PC-9 (cell line): ENCODE measurements at regions of chr2 and their contacts with region 1.

Region 1: GRCh38 chr2:127408004-127408806 is 10.0 kb upstream of the PROC start:
- DNase-seq: peak; percentile 78 to 98
- H3K4me3 ChIP-seq: peak overlapping the region; percentile 65
- H3K27ac ChIP-seq: peak overlapping the region; percentile 56
- H3K4me1 ChIP-seq: peaks cover 48% of the 10 kb centered on the region
- H3K27me3 ChIP-seq: no peaks in the 10 kb centered on the region
- CTCF ChIP-seq: no peak

Region 2: DNA sequence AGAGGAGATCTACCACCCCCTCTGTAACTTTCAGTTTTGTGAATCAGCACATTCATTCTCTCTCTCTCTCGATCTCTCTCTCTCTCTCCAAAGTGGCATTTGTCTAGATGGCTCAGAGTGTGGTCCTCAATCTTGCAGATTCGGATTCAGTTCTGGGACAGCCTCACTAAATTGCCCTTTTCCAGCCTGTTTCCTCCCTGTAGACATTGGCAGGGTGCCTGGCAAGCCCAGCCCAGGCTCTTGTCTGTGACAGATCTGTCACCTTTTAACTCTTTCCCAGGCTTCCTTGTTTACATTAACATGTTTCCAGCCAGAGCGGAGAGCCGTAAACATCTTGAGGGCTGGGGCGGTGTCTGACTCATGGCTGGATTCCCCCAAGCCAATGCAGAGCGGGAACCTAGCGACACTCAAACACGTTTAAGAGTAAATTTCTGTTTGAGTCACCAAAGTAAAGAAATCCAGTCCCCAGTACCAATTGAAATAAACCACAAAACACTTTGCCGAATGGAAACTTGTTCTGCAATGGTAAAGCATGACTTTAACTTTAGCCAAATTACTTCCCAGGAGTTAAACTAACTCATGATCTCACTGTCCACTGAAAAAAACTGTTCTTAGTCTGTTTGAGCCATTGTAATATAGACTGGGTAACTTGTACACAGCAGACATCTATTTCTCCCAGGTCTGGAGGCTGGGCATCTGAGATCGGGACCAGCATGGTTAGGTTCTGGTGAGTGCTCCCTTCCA is 181.5 kb before region 1 on chr2:
- CTCF ChIA-PET with region 1: no interaction called
- POLR2A ChIA-PET with region 1: no interaction called
- intact Hi-C with region 1: loop called (anchors 5 kb)
- DNase-seq: peak; percentile 94 to 100
- H3K4me3 ChIP-seq: no peak overlapping the region
- H3K27ac ChIP-seq: peak overlapping the region; percentile 88
- H3K4me1 ChIP-seq: peaks cover 50% of the 10 kb centered on the region
- H3K27me3 ChIP-seq: no peaks in the 10 kb centered on the region
- CTCF ChIP-seq: no peak

Region 3: DNA sequence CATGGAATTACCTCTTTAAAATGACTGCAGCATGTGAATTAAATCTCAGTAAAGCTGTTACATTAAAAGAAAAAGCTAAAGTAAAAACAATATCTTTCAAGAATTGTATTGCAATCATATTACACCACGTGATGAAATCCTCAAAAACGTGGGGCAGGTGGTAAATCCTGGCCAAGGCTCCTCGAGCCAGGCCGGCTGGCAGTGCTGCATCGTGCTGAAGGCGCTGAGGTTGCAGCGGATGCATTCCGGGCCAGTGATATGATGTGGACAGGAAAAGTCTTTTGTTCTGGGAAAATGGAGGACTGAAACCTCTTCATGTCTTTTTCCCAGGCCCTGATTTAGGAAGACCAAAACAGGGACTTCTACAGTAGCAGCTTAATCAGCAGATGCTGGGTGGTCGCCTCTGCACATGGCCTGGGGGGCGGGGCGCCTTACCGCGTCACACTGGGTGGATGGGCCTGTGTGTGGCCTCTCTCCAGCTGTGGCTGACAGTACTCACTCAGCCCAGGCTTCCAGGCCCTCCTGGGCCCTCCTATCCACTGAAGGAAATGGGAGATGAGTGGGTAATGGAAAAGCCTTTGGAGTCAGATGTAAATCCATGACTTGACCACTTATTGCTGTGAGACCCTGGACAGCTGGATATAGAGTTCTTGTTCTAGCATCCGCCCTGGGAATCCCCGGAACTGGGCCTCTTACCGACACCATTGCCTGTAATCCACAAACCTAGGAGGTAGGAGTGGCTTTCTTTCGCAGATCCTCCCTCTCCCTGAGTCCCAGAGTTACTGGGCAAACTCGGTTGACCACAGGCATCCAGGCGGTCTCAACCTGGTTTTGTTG is 55.2 kb after region 1 on chr2:
- CTCF ChIA-PET with region 1: no interaction called
- POLR2A ChIA-PET with region 1: no interaction called
- intact Hi-C with region 1: no loop called
- DNase-seq: peak in 1 of 2 experiments; percentile 10
- H3K4me3 ChIP-seq: no peak overlapping the region
- H3K27ac ChIP-seq: no peak overlapping the region
- H3K4me1 ChIP-seq: no peaks in the 10 kb centered on the region
- H3K27me3 ChIP-seq: no peaks in the 10 kb centered on the region
- CTCF ChIP-seq: no peak